Heart left ventricle (tissue), 16 donors: ENCODE measurements at regions of chr9 and their contacts with region 1.

Region 1: DNA sequence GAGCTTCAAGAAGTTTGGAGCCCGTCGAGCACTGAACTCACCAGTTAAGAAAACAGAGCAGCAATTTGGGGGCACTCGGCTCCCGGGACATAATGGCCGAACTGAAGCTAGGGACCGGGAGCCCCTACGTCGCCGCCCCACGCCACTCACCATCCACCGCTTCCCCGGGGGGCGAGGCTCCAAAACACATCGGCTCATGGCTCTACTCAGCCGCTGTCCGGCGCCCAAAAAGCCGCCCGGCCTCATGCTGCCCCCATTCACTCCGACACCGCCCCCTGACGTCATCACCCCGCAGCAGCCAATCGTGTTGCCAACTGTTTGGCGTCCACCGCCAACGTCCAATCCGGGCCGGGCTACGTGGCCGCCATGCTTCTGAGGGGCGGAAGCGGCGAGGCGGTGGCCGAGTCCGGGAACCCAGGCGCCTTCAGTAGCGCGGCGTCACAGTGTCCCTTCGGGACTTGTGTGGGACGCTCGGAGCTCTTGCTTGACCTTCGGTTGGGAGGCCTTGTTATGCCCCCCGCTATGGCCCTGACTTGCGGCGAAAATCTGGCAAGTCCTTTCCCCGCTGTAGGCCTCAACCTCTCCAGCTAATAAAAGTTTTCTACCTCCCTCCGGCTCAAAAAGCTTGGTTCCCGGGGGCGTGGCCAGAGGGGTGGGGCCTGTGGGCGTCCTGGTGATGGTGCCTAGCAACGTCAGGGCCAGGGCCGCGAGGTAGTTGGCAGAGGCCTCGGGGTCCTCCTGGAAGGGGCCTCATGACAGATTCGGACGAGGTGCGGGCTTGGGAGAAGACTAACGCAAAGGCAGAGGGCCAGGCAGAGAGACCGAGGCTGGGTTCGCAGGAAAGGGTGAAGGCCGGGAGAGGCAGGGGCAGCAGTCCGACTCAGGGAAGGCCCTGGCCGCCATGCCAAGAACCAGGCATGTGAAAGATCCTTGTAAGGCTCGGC is at the starts of genes PTRH1 and TTC16:
- DNase-seq: peak; percentile 98 to 99 (median 98)
- ATAC-seq: peak; percentile 96 to 98 (median 96)
- H3K4me3 ChIP-seq: peak within 1 kb of the TSS; percentile 58 to 91 (median 71)
- H3K27ac ChIP-seq: peak within 1 kb of the TSS in 11 of 12 donors; percentile 64 to 91 (median 82)
- H3K4me1 ChIP-seq: peaks cover 0 to 26% (median 13%) of the 10 kb centered on the region in 12 donors
- H3K27me3 ChIP-seq: no peaks in the 10 kb centered on the region
- CTCF ChIP-seq: no peak
- POLR2A ChIP-seq: peak in 1 of 2 donors; percentile 65
- total RNA-seq, gene PTRH1: 7.3 to 30.5 (median 13.5) TPM
- total RNA-seq, gene TTC16: 0.09 to 0.61 (median 0.24) TPM in 8 of 9 donors, not detected in the other

Region 2: DNA sequence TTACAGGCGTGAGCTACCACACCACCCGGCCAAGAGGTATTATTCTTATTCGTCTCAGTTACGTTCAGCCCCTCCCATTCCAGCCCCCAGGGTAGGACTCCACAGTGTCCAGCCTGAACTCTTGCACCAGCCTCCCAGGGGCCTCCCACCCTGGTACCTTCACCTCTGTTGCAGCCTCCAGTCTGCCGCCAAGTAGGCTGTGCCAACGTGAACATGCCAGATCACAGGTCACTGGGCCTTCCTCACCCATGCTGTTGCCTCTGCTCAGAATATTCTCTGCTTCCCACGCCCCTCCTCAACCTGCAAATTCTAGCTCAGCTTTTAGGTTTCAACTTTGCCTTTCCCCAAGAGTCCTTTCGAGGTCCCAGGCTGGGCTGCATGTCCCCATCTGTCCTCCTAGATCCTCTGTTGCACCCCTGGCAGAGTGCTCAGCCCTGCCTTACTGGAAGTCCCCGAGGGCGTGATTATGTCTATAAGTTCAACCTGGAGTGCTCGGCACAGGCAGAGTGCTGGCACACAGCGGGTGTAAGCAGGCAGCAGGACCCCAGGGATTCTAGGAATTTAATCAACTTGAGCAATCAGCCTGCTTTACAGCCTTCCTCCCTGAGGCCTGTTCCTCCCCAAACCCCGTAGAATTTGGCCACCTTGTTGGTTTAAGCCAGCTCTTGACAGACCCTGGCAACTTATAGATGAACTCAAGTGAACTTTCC is 116.7 kb before region 1 on chr9:
- intact Hi-C with region 1: loop called in 1 of 10 experiments (anchors 5 kb)
- DNase-seq: no peak
- ATAC-seq: no peak
- H3K4me3 ChIP-seq: no peak overlapping the region
- H3K27ac ChIP-seq: no peak overlapping the region
- H3K4me1 ChIP-seq: no peaks in the 10 kb centered on the region
- H3K27me3 ChIP-seq: no peaks in the 10 kb centered on the region
- CTCF ChIP-seq: no peak
- POLR2A ChIP-seq: no peak

Region 3: DNA sequence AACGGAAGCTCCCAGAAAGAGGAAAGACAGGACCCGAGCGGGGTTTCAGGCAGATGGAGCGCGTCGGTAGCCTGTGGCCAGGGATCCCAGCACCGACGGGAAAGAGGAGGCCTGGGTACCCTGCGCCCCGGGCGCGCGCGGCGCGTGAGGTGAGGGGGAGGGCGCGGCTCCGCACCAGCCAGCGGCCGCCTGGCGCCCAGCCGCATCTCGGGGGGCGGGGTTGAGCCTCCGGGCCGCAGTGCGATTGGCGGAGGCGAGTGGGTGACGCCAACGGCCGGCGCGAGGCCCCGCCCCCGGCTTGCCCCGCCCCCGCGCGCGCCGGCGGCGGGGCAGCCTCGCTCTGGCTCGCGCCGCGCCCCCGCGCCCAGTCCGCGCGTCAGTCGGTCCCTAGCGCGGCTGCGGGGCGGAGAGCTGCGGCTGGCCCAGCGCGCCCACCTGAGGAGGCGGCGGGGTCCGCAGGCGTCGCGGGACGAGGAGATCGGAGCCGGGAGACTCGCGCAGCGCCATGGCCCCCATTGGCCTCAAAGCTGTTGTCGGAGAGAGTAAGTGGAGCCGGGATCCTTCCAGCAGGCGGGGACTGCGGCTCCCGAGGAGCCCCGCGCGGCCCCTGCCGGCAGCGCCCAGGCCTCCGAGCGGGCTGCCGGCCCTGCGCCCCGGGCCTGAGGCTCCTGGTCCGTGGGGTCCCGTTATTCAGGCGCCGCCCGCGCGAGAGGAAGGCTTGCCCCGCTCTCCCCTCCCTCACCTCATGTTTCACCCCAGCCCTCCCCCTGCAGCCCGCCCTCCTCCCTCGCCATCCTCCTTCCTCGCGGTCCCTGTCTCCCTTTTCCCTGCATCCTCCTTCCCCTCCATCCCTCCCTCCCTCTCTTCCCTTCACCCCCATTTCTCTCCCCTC is 103.5 kb before region 1 on chr9 and contains the start of gene STXBP1:
- intact Hi-C with region 1: loop called in 5 of 10 experiments (anchors 1 to 5 kb)
- DNase-seq: peak; percentile 90 to 95 (median 92)
- ATAC-seq: peak; percentile 71 to 90 (median 86)
- H3K4me3 ChIP-seq: peak within 1 kb of the TSS; percentile 68 to 99 (median 93)
- H3K27ac ChIP-seq: peak within 1 kb of the TSS; percentile 85 to 98 (median 94)
- H3K4me1 ChIP-seq: peaks cover 0 to 47% (median 35%) of the 10 kb centered on the region in 12 donors
- H3K27me3 ChIP-seq: peaks cover 0 to 5% (median 0%) of the 10 kb centered on the region in 9 donors
- CTCF ChIP-seq: peak in 6 of 12 donors; percentile 9 to 50 (median 27)
- POLR2A ChIP-seq: peak in 1 of 2 donors; percentile 91
- total RNA-seq, gene STXBP1: 35.9 to 102 (median 50.2) TPM

Region 4: GRCh38 chr9:127660886-127661741 is 54.6 kb before region 1 on chr9:
- intact Hi-C with region 1: no loop called
- DNase-seq: no peak
- ATAC-seq: no peak
- H3K4me3 ChIP-seq: no peak overlapping the region
- H3K27ac ChIP-seq: peak overlapping the region in 1 of 12 donors; percentile 5
- H3K4me1 ChIP-seq: peaks cover 0 to 15% (median 0%) of the 10 kb centered on the region in 12 donors
- H3K27me3 ChIP-seq: no peaks in the 10 kb centered on the region
- CTCF ChIP-seq: no peak
- POLR2A ChIP-seq: no peak

Region 5: DNA sequence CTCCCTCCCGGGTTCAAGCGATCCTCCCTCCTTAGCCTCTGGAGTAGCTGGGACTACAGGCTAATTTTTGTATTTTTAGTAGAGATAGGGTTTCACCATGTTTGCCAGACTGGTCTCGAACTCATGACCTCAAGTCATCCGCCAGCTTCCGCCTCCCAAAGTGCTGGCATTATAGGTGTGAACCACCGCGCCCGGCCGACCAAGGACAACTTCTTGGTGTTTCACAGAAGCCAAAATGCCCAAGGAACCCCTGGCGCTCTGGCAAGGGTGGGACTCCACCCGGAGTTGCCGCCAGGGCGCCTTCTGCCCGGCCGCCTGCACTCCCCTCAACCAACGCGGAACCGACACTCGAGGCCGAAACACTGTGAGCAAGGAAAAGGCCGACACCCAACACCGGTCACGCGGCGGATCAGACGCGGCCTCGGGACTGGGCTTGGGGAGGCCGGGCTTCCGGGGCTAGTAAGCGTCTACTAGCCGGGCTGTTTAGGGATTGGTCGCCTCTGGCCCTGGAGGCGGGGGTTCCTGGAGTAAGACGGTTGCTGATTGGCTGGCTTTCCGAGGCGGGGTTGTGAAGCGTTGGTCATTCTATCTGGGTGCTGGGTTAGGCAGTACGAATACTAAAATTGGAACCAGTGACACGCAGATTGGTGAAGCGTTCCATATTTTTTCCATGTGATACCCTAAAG is 16.5 kb before region 1 on chr9:
- intact Hi-C with region 1: loop called in 1 of 10 experiments (anchors 1 kb)
- DNase-seq: peak; percentile 97 to 99 (median 98)
- ATAC-seq: peak; percentile 99
- H3K4me3 ChIP-seq: peak overlapping the region in 9 of 12 donors; percentile 23 to 49 (median 38)
- H3K27ac ChIP-seq: peak overlapping the region; percentile 26 to 92 (median 87)
- H3K4me1 ChIP-seq: peaks cover 0 to 14% (median 8%) of the 10 kb centered on the region in 12 donors
- H3K27me3 ChIP-seq: no peaks in the 10 kb centered on the region
- CTCF ChIP-seq: peak in 4 of 12 donors; percentile 16 to 29 (median 24)
- POLR2A ChIP-seq: peak in 1 of 2 donors; percentile 67